ENCODE measurements at regions of chr9 and their contacts with region 1.

Region 1: DNA sequence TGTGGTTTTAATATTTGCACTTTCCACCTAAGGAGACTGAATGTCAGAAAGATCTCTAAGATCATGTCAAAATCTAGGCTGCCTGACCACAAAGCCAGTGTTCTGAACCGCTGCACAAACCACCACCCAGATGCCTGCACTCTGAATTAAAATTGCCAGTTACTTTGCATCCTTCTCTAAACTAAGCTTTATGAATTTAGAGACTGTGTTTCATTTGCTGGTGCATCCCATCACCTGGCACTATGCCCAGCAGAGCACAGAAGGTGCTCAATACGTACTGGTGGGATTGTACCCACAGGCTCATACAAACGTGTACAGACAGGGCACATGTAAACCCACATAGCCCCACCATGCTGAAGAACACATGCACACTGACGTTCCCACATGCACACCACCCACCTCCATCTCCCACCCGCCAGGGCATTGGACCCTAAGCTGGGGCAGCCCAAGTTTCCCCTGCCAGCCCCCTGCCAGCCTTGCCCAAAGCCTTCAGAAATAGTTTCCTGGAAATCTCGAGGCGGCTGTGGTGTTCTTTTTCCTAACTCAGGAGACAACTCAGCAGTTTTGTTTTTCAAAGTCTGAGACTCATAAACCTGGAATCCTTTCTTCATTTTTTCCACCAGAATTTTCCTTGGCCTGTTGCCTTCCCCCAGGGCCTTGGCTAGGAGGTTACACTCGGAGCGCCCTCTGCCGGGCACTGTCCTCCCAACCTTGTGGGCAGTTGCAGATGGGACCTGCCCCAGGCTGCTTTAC is 9.6 kb upstream of the TRAF1 start:
- DNase-seq: peak; percentile 69 to 94 (median 88)
- ATAC-seq: peak; percentile 65
- H3K4me3 ChIP-seq: no peak overlapping the region
- H3K4me3 Mint-ChIP-seq: peak overlapping the region; percentile 30
- H3K27ac ChIP-seq: peak overlapping the region; percentile 52 to 95
- H3K27ac Mint-ChIP-seq: peak overlapping the region; percentile 90
- H3K4me1 ChIP-seq: peaks cover 61% of the 10 kb centered on the region
- H3K4me1 Mint-ChIP-seq: peaks cover 60% of the 10 kb centered on the region
- H3K27me3 ChIP-seq: no peaks in the 10 kb centered on the region
- H3K27me3 Mint-ChIP-seq: no peaks in the 10 kb centered on the region
- CTCF ChIP-seq: peak; percentile 84

Region 2: DNA sequence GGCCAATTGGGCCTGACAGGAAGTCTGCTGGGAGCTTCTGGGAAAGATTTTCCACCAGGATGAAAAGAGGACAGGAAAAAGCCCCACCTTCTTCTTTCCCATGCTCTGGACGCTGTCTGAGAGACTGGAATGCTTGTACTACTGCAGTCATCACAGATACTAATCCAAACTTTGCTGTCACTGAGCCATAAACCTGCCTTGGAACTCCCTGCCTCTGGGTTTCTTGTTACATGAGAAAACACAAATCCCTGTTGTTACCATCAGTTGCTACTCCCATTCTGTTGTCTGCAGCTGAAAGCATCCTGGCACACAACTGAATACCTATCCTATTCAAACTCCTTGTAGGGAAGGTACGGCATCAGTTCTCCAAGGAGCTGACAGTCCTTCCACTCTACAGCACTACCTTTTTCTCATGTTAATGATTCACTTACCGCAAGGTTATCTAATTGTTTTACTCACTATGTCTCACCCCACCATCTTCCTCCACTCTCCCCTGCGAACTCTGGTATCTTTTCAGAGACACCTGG is 523.7 kb before region 1 on chr9:
- CTCF ChIA-PET with region 1: no interaction called
- POLR2A ChIA-PET with region 1: no interaction called
- intact Hi-C with region 1: no loop called
- DNase-seq: no peak
- ATAC-seq: no peak
- H3K4me3 ChIP-seq: no peak overlapping the region
- H3K4me3 Mint-ChIP-seq: no peak overlapping the region
- H3K27ac ChIP-seq: no peak overlapping the region
- H3K27ac Mint-ChIP-seq: no peak overlapping the region
- H3K4me1 ChIP-seq: no peaks in the 10 kb centered on the region
- H3K4me1 Mint-ChIP-seq: no peaks in the 10 kb centered on the region
- H3K27me3 ChIP-seq: no peaks in the 10 kb centered on the region
- H3K27me3 Mint-ChIP-seq: no peaks in the 10 kb centered on the region
- CTCF ChIP-seq: no peak

Region 3: GRCh38 chr9:120792898-120793765 is 143.1 kb before region 1 on chr9 and contains the start of gene FBXW2:
- CTCF ChIA-PET with region 1: interaction called, 3 read pairs
- POLR2A ChIA-PET with region 1: interaction called, 9 read pairs
- intact Hi-C with region 1: loop called (anchors 1 to 5 kb)
- DNase-seq: peak; percentile 50 to 93 (median 84)
- ATAC-seq: peak; percentile 81
- H3K4me3 ChIP-seq: peak within 1 kb of the TSS; percentile 60 to 88
- H3K4me3 Mint-ChIP-seq: peak within 1 kb of the TSS; percentile 85
- H3K27ac ChIP-seq: peak within 1 kb of the TSS; percentile 88 to 90
- H3K27ac Mint-ChIP-seq: peak within 1 kb of the TSS; percentile 87
- H3K4me1 ChIP-seq: peaks cover 26% of the 10 kb centered on the region
- H3K4me1 Mint-ChIP-seq: peaks cover 60% of the 10 kb centered on the region
- H3K27me3 ChIP-seq: no peaks in the 10 kb centered on the region
- H3K27me3 Mint-ChIP-seq: no peaks in the 10 kb centered on the region
- CTCF ChIP-seq: no peak
- total RNA-seq, gene FBXW2: 51.9 to 54.7 TPM

Region 4: GRCh38 chr9:120875954-120876841 is 60.0 kb before region 1 on chr9:
- CTCF ChIA-PET with region 1: interaction called, 351 read pairs
- POLR2A ChIA-PET with region 1: interaction called, 10 read pairs
- intact Hi-C with region 1: loop called (anchors 1 to 2 kb)
- DNase-seq: peak; percentile 28 to 89 (median 85)
- ATAC-seq: peak; percentile 47
- H3K4me3 ChIP-seq: peak overlapping the region; percentile 64 to 76
- H3K4me3 Mint-ChIP-seq: peak overlapping the region; percentile 80
- H3K27ac ChIP-seq: peak overlapping the region; percentile 69 to 85
- H3K27ac Mint-ChIP-seq: peak overlapping the region; percentile 88
- H3K4me1 ChIP-seq: peaks cover 48% of the 10 kb centered on the region
- H3K4me1 Mint-ChIP-seq: peaks cover 56% of the 10 kb centered on the region
- H3K27me3 ChIP-seq: no peaks in the 10 kb centered on the region
- H3K27me3 Mint-ChIP-seq: no peaks in the 10 kb centered on the region
- CTCF ChIP-seq: no peak

Region 5: DNA sequence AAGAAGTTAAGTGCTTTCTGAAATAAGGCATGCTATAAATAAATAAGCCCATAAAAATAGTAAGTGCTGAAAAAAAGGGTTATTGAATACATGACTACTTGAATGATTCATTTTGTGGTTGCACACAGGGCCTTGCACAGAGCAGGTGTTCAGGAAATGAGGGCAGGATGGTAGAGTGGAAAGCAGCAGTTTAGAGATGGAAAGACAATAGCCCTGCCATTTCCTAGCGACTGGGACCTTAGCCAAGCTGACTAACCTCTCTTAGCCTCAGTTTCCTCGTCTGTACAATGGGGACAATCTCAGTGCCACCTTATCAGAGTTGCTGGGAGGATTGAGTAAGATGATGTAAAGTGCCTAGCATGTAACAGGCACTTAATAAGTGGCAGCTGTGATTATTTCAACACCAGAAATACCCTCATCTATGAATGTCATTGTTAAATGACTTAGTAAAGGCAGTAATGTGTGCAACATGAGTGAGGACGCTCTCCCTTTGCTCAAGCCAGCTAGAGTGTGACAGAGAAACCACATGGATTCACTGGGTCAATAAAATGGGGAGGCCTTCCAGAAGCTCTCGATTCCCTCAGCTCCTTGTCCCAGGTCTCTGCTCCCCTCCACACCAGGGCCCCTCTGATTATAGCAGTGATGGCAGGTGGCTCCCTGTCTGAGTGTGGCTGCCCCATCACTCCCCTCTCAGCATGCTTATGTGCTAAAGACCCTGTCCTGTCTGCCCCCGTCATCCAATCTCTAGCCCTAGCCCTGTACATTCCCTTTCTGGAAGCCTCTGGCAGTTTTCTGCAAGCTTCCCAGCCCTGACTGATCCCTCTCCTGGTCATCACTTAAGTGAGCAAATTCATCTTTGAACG is 43.2 kb before region 1 on chr9:
- CTCF ChIA-PET with region 1: interaction called, 14 read pairs
- POLR2A ChIA-PET with region 1: interaction called, 1,009 read pairs
- intact Hi-C with region 1: loop called in 1 of 2 experiments (anchors 1 kb)
- DNase-seq: peak in 8 of 9 experiments; percentile 46 to 84 (median 70)
- ATAC-seq: peak; percentile 59
- H3K4me3 ChIP-seq: peak overlapping the region in 1 of 2 experiments; percentile 6
- H3K4me3 Mint-ChIP-seq: peak overlapping the region; percentile 30
- H3K27ac ChIP-seq: peak overlapping the region; percentile 68
- H3K27ac Mint-ChIP-seq: peak overlapping the region; percentile 99
- H3K4me1 ChIP-seq: peaks cover 82% of the 10 kb centered on the region
- H3K4me1 Mint-ChIP-seq: peaks cover 68% of the 10 kb centered on the region
- H3K27me3 ChIP-seq: no peaks in the 10 kb centered on the region
- H3K27me3 Mint-ChIP-seq: no peaks in the 10 kb centered on the region
- CTCF ChIP-seq: no peak

Region 6: GRCh38 chr9:120916588-120916987 is 19.6 kb before region 1 on chr9:
- CTCF ChIA-PET with region 1: interaction called, 12 read pairs
- POLR2A ChIA-PET with region 1: interaction called, 1,009 read pairs
- intact Hi-C with region 1: loop called in 1 of 2 experiments (anchors 2 kb)
- DNase-seq: no peak
- ATAC-seq: no peak
- H3K4me3 ChIP-seq: no peak overlapping the region
- H3K4me3 Mint-ChIP-seq: peak overlapping the region; percentile 16
- H3K27ac ChIP-seq: peak overlapping the region in 1 of 2 experiments; percentile 14
- H3K27ac Mint-ChIP-seq: peak overlapping the region; percentile 90
- H3K4me1 ChIP-seq: peaks cover 73% of the 10 kb centered on the region
- H3K4me1 Mint-ChIP-seq: peaks cover 86% of the 10 kb centered on the region
- H3K27me3 ChIP-seq: no peaks in the 10 kb centered on the region
- H3K27me3 Mint-ChIP-seq: no peaks in the 10 kb centered on the region
- CTCF ChIP-seq: no peak

Region 7: DNA sequence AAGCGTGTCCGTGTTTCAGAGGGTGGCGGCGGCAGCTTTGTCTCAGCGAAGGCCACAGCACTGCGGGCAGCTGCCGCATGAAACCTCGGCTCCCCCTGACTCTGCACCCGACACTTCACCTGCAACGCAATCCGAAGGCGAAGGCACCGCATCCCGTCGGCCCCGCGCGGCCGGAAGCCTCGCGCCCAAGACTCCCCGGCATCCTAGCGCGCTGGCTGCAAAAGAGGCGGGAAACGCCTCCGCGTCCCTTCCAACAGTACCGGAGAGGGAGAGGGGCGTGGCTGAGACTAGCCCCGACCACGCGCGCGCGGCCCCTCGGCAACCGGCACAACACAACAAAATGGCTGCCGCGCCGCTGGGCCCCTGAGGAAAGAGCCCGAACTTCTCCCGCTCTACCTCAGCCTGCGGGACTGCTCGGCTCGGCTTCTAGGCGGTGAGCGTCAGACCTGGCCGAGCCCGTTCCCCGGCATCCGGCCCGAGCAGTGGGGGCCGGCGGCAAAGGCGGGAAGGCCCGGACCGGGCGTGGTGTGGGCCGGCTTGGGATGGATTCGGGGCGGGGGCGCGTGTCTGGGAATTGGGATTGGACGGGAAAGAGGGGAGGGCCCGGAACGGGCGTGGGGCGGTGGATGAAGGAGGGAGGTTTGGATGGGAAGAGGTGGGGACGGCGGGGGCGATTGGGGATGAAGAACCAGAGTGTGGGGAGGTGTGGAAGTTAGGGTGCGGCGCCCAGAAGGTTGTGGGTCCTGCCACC is 138.6 kb after region 1 on chr9 and contains the start of gene CNTRL:
- CTCF ChIA-PET with region 1: interaction called, 3 read pairs
- POLR2A ChIA-PET with region 1: interaction called, 3 read pairs
- intact Hi-C with region 1: loop called in 1 of 2 experiments (anchors 5 kb)
- DNase-seq: peak; percentile 62 to 91 (median 85)
- ATAC-seq: peak; percentile 83
- H3K4me3 ChIP-seq: peak within 1 kb of the TSS; percentile 78 to 80
- H3K4me3 Mint-ChIP-seq: peak within 1 kb of the TSS; percentile 98
- H3K27ac ChIP-seq: peak within 1 kb of the TSS; percentile 77 to 80
- H3K27ac Mint-ChIP-seq: peak within 1 kb of the TSS; percentile 95
- H3K4me1 ChIP-seq: peaks cover 19% of the 10 kb centered on the region
- H3K4me1 Mint-ChIP-seq: peaks cover 43% of the 10 kb centered on the region
- H3K27me3 ChIP-seq: no peaks in the 10 kb centered on the region
- H3K27me3 Mint-ChIP-seq: no peaks in the 10 kb centered on the region
- CTCF ChIP-seq: no peak
- total RNA-seq, gene CNTRL: 29.8 to 30.8 TPM

Region 8: GRCh38 chr9:121686930-121687541 is 750.8 kb after region 1 on chr9:
- CTCF ChIA-PET with region 1: no interaction called
- POLR2A ChIA-PET with region 1: no interaction called
- intact Hi-C with region 1: no loop called
- DNase-seq: peak; percentile 17 to 72 (median 57)
- ATAC-seq: peak; percentile 59
- H3K4me3 ChIP-seq: no peak overlapping the region
- H3K4me3 Mint-ChIP-seq: no peak overlapping the region
- H3K27ac ChIP-seq: no peak overlapping the region
- H3K27ac Mint-ChIP-seq: no peak overlapping the region
- H3K4me1 ChIP-seq: no peaks in the 10 kb centered on the region
- H3K4me1 Mint-ChIP-seq: no peaks in the 10 kb centered on the region
- H3K27me3 ChIP-seq: no peaks in the 10 kb centered on the region
- H3K27me3 Mint-ChIP-seq: peaks cover 10% of the 10 kb centered on the region
- CTCF ChIP-seq: peak; percentile 65

Measured in CD8-positive, alpha-beta T cell (primary cell).